Mammary epithelial cell (primary cell): ENCODE measurements at regions of chr17 and their contacts with region 1.

Region 1: DNA sequence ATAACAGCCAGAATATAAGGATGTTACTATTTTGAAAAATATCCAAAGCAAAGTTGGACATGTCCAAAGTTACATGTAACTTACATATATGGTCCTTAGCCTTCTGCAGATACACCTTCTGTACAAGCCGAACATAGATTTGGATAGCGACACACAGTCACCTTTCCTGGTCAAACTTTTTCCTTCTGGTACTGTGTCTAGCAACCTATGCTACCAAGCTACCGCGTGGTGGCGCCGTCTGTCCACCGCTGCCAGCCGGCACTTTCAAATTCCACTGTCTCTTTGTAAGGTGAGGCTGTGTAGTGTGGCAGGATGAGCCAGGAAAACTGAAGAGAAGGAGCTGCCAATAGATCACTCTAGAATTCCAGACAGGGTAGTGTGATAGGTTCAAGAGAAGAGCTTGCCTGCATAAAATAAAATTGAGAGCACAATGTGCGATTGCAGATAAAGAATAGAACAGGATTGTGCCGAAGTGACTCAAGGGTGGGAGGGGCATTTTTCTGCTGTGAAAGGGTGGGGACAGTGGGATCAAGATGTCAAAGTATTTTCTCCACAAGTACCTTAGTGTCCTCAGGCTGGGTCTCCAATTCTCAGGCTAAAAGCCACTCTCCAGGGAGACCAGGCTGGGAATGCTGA is 366.9 kb downstream of the SLC39A11 start:
- DNase-seq: peak; percentile 56
- H3K4me3 ChIP-seq: no peak overlapping the region
- H3K27ac ChIP-seq: no peak overlapping the region
- H3K4me1 ChIP-seq: peaks cover 19% of the 10 kb centered on the region
- H3K27me3 ChIP-seq: no peaks in the 10 kb centered on the region
- CTCF ChIP-seq: peak; percentile 82 to 87

Region 2: DNA sequence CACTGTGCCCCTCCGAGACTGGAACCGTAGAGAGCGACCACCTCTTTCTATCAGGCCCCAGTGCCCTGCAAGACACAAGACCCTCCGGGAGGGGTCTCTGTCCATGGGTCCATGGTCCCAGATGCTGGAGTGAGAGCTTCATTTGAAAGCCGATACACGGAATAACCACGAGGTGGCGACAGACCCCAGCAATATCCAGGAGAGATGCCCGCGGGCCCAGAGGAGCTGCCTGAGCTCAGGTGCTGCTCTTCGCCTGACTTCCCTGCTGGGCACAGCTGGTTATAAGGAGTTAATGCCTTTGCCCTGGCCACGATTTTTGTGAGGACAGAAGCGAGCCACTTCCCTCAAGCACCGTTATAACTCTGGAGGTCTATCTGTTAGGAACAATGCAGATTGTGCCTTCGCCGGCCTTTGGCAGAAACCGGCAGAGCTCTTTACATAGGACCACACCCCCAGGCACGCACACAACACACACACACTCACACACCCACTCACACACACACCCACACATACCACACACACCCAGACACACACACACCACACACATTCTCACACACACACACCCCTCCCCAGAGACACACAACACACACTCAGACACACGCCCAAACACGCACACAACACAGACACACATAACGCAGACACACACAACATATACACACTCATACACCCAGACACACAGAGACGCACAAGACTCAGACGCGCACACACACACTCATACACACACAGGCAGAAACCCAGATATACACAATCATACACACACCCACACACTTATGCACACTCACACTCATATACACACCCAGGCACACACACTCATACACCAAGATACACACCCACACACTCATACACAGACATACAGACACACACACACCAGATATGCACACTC is 168.4 kb before region 1 on chr17:
- CTCF ChIA-PET with region 1: interaction called, 41 read pairs
- dilution Hi-C with region 1: no loop called
- in situ Hi-C with region 1: no loop called
- intact Hi-C with region 1: loop called (anchors 1 kb)
- DNase-seq: peak; percentile 67
- H3K4me3 ChIP-seq: no peak overlapping the region
- H3K27ac ChIP-seq: no peak overlapping the region
- H3K4me1 ChIP-seq: peaks cover 23% of the 10 kb centered on the region
- H3K27me3 ChIP-seq: no peaks in the 10 kb centered on the region
- CTCF ChIP-seq: peak; percentile 80 to 88

Region 3: DNA sequence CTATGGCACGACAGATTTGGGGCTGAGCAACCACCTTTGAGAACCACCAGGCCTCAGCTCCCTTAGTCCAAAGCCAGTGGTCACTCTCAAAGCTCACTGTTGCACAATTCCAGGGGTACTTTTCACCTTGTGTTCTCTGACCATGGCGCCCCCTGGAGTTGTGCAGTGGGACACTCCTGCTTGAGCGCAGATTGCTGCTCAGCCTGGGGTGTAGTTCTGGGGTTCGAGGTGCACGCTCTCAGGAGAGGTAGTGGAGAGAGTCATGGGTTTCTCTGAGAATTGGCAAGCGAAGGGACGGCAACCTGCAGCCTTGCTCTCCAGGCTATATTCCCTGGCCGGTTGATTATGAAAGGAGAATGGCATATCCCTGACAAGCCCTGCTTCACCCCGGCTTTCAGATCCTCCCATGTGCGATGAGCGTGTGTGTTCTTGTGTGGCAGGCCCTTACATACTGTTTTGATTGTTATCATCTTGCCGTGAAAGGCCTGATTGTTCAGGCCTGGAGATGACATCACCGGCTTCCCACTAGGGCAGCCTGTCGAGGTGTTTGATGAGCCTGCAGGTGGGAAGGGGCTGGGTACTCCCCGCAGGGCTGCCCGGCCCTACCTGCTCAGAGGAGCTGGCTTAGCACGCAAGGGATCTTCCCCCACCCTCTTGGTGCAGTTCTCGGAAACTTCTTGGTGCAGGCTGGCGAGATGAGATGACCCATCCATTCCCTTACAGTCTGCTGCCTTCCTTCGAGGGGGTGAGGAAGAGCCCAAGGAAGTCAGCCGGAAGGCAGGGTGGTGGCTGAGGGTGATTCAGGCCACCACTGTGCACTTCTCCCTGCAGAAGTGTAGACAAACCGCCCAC is 64.2 kb before region 1 on chr17:
- CTCF ChIA-PET with region 1: no interaction called
- dilution Hi-C with region 1: no loop called
- in situ Hi-C with region 1: no loop called
- intact Hi-C with region 1: loop called (anchors 1 kb)
- DNase-seq: peak; percentile 100
- H3K4me3 ChIP-seq: no peak overlapping the region
- H3K27ac ChIP-seq: peak overlapping the region; percentile 83
- H3K4me1 ChIP-seq: peaks cover 37% of the 10 kb centered on the region
- H3K27me3 ChIP-seq: no peaks in the 10 kb centered on the region
- CTCF ChIP-seq: peak; percentile 71 to 74

Region 4: DNA sequence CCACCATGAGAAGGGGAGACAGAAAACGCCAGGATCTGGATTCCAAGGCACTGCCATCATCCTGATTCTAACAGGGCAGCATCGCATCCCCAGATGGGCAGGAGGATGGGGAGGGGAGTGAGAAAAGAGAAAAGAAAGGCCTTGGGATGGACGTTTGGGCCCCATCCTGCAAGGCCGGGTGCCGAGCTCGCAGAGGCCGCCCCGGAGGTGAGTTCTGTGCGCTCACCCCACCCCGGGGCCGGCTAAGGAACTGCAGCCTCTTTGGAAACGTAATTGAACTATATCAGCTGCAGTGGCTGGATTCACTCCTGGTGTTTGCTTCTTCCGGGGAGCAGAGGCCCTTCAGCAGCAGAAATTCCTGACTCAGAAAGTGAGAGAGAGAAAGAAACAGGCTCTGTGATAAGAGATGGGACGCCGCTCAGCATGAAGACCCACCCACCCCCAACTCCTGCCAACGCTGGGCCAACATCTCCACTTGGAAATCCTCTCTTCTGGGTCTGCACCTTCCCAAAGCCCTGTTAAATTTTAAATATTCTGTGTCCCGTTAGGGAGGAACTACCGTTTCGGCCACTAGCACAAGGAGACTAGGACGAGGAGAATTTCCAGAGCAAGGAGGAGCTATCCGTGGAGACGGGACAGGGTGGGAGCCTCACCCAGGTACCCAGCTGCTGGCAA is 430.8 kb after region 1 on chr17:
- CTCF ChIA-PET with region 1: no interaction called
- dilution Hi-C with region 1: no loop called
- in situ Hi-C with region 1: no loop called
- intact Hi-C with region 1: loop called (anchors 1 kb)
- DNase-seq: peak; percentile 47
- H3K4me3 ChIP-seq: no peak overlapping the region
- H3K27ac ChIP-seq: no peak overlapping the region
- H3K4me1 ChIP-seq: no peaks in the 10 kb centered on the region
- H3K27me3 ChIP-seq: no peaks in the 10 kb centered on the region
- CTCF ChIP-seq: peak; percentile 64 to 92

Region 5: GRCh38 chr17:73255671-73256181 is 530.2 kb after region 1 on chr17:
- CTCF ChIA-PET with region 1: no interaction called
- dilution Hi-C with region 1: no loop called
- in situ Hi-C with region 1: loop called in 1 of 2 experiments (anchors 10 kb)
- intact Hi-C with region 1: loop called (anchors 1 kb)
- DNase-seq: peak; percentile 53
- H3K4me3 ChIP-seq: no peak overlapping the region
- H3K27ac ChIP-seq: no peak overlapping the region
- H3K4me1 ChIP-seq: no peaks in the 10 kb centered on the region
- H3K27me3 ChIP-seq: no peaks in the 10 kb centered on the region
- CTCF ChIP-seq: peak; percentile 93 to 99